ENCODE measurements at regions of chr2 and their contacts with region 1.

Region 1: DNA sequence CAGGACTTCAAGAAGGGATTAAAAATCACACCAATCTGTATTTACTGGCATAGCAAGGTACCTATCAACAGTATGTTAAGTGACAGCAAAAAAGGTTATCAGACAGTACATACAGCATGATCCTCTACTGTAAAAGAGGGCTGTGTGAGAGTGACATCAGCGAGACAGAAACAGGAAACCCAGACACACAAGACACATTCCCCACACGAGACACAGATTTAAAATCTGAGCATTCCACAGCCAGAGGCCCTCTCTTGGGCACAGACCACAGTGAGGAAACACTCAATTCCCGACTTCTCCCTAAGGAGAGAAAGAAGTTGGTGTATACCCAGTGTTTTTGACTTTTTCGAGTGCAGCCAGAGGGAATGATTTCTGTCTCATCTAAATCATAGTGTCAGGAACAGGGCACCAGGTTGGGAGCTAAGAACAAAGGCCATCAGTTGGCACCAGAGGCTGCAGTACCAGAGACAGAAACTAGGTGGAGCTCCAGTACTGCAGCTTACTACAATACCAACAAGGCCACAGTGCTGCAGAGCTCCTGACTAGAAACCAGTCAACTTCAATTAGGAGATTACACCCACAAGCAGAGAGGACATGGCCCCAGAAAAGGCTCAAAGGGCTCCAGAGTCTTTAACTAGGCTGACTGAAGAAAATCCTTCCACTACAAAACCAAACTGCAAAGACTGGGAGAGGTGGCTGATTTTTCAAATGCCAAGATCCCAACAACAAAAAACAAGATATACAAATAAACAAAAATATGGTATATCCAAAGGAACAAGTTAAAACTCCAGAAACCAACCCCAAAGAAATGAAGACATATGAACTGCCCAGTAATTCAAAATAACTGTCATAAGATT is 41.0 kb downstream of the UNC50 start:
- DNase-seq: peak; percentile 86 to 95
- H3K4me3 ChIP-seq: no peak overlapping the region
- CTCF ChIP-seq: peak in 1 of 3 donors; percentile 85
- POLR2A ChIP-seq: no peak

Region 2: GRCh38 chr2:98835831-98836385 is 186.5 kb after region 1 on chr2:
- intact Hi-C with region 1: loop called (anchors 5 kb)
- DNase-seq: no peak
- H3K4me3 ChIP-seq: no peak overlapping the region
- CTCF ChIP-seq: no peak
- POLR2A ChIP-seq: no peak

Region 3: DNA sequence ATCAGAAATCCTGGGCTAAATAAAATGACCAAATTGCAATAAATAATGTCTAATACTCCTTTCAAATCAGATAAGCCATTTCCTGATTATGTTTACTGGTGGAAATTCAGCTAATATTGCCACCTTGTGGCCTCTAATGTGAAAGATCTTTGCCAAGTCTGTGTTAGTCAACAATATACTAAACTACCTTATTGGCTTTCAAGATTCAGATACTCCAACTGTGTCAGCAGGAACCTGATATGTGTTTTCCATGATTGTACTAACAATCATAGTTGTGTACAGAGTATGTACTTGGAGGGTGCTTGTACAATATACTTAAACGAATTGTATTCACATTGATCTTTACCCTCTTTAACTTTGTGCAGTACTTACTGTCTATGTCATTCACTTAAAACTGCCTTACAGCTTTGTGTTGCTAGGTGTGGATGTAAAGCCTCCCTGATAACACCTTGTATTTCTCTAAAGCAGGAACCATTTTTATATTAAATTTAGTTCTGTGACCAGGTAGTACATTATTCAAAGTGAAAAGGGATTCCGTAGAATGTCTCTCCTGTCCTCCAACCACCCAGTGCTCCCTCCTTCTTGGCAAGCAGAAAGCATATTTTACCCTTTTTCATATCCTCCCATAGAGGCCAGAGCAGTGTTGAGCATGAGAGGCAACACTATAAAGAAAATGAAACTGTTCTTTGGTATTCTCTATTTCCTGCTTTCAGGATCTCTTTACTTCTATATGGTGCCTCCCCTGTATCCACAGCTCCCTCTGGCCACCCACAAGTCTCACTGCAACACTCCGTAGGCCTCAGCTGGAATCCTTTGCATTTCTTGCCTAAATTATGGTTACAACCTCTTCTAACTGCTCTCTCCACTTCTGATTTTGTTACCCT is 417.0 kb after region 1 on chr2:
- intact Hi-C with region 1: loop called (anchors 5 kb)
- DNase-seq: no peak
- H3K4me3 ChIP-seq: no peak overlapping the region
- CTCF ChIP-seq: no peak
- POLR2A ChIP-seq: no peak